GM12878 (cell line): ENCODE measurements at regions of chr2 and their contacts with region 1.

Region 1: DNA sequence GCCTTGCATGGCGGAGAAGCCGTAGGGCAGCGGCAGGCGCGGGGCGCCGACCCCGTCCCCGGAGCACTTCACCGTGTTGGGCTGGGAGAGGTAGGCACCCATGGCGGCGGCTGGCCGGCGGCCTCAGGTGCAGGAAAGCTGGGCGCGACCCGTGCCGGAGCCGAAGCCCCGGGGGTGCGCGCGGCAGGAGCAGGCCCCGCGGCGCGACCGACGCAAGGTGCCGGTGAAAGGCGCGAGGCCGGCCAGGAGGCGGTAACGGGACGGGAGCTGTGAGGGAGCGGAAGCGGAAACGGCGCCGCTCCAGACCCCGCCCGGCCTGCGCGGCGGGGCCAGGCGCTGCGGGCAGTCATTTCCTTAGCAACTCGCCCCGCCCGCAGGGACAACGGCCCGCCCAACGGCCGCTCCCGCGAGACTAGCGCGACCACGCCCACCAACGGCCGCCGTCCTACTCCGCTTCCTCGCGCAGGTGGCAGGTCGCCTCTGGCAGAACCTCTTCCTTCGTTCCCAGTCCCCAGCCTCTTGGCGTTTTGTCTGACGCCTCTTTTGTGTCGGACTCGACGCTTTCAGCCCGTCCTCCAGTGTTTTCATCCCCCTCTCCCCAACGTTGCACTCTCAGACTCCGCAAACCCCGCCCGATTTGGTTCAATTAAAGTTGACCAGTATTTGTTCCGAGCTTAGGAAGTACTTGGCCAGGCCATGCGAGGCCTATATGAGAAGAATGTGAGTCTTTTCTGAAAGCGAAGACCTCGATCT is at the start of gene PPM1G:
- DNase-seq: peak; percentile 85
- ATAC-seq: peak; percentile 97
- H3K4me3 ChIP-seq: peak within 1 kb of the TSS; percentile 99
- H3K27ac ChIP-seq: peak within 1 kb of the TSS; percentile 76
- H3K4me1 ChIP-seq: peaks cover 6% of the 10 kb centered on the region; the same call in 1 of the 2 replicates
- H3K27me3 ChIP-seq: no peaks in the 10 kb centered on the region
- CTCF ChIP-seq: no peak
- EP300 ChIP-seq: no peak
- POLR2A ChIP-seq: peak; percentile 95
- RAD21 ChIP-seq: no peak
- polyA plus RNA-seq, gene PPM1G: 78.5 to 81.1 TPM

Region 2: GRCh38 chr2:26993768-26994167 is 415.7 kb before region 1 on chr2:
- CTCF ChIA-PET with region 1: no interaction called
- POLR2A ChIA-PET with region 1: no interaction called
- RAD21 ChIA-PET with region 1: no interaction called
- SMC1A ChIA-PET with region 1: no interaction called
- in situ Hi-C with region 1: no loop called
- intact Hi-C with region 1: no loop called
- DNase-seq: no peak
- ATAC-seq: no peak
- H3K4me3 ChIP-seq: no peak overlapping the region
- H3K27ac ChIP-seq: no peak overlapping the region
- H3K4me1 ChIP-seq: no peaks in the 10 kb centered on the region
- H3K27me3 ChIP-seq: peaks cover 1 to 2% of the 10 kb centered on the region in 2 experiments; a peak in 3 of 4 replicates
- CTCF ChIP-seq: no peak
- EP300 ChIP-seq: no peak
- POLR2A ChIP-seq: no peak
- RAD21 ChIP-seq: no peak

Region 3: DNA sequence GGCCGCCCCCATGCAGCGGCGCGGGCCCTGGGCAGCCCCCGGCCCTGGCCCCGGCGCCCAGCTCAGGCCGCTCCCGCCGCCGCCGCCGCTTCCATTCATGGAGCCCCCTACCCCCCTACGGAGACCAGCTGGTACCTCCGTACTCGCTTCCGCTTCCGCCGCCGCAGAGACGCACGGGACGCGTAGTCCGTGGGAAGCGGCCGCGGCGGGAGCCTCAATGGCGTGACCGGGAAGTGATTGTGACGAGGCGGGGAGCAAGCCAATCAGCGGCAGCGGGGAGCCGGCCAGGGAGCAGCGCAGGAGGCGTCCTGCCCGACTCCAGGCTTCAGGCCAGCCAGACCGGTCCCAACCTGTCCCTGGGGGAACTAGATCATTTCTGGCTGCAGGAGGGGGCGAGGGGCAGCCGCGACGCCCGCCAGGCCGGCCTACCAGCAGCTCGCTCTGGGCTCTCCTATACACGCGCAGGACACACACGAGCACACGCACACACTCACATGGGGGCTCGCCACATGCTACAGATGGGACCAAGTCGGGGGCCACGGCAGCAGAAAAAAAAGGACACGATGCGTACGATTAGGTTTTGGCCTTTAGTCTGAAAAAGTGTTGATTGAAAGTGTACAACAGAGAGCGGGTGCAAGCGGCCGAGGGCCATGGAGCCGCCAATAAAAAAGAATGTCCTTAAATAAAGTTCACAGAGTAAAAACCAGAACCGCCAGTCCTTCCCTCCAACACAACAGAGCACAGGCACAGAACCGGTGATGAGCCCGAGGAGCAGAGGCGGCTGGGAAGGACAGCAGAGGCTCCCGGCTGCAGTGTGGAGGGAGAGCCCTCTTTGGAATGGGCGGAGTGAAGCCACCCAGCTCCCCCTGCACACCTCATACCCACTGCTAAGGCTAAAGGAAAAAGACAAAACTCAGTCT is 28.6 kb before region 1 on chr2 and contains the start of gene ZNF513:
- CTCF ChIA-PET with region 1: interaction called, 3 read pairs
- POLR2A ChIA-PET with region 1: interaction called, 10 read pairs
- RAD21 ChIA-PET with region 1: no interaction called
- SMC1A ChIA-PET with region 1: interaction called, 4 read pairs
- in situ Hi-C with region 1: no loop called
- intact Hi-C with region 1: no loop called
- DNase-seq: peak; percentile 55
- ATAC-seq: peak; percentile 95
- H3K4me3 ChIP-seq: peak within 1 kb of the TSS; percentile 69
- H3K27ac ChIP-seq: peak within 1 kb of the TSS; percentile 96
- H3K4me1 ChIP-seq: peaks cover 9% of the 10 kb centered on the region; the same call in 1 of the 2 replicates
- H3K27me3 ChIP-seq: no peaks in the 10 kb centered on the region
- CTCF ChIP-seq: no peak
- EP300 ChIP-seq: no peak
- POLR2A ChIP-seq: peak; percentile 91
- RAD21 ChIP-seq: no peak
- polyA plus RNA-seq, gene ZNF513: 0.06 to 0.18 TPM

Region 4: GRCh38 chr2:27428213-27428977 is 18.9 kb after region 1 on chr2 and contains the start of gene NRBP1:
- CTCF ChIA-PET with region 1: interaction called, 52 read pairs
- POLR2A ChIA-PET with region 1: interaction called, 71 read pairs
- RAD21 ChIA-PET with region 1: interaction called, 29 read pairs
- SMC1A ChIA-PET with region 1: interaction called, 20 read pairs
- in situ Hi-C with region 1: no loop called
- intact Hi-C with region 1: loop called (anchors 2 kb)
- DNase-seq: peak; percentile 52
- ATAC-seq: peak; percentile 93
- H3K4me3 ChIP-seq: peak within 1 kb of the TSS; percentile 97
- H3K27ac ChIP-seq: peak within 1 kb of the TSS; percentile 85
- H3K4me1 ChIP-seq: no peaks in the 10 kb centered on the region
- H3K27me3 ChIP-seq: no peaks in the 10 kb centered on the region
- CTCF ChIP-seq: no peak
- EP300 ChIP-seq: no peak
- POLR2A ChIP-seq: peak; percentile 93
- RAD21 ChIP-seq: no peak
- polyA plus RNA-seq, gene NRBP1: 5.7 to 8.6 TPM

Region 5: DNA sequence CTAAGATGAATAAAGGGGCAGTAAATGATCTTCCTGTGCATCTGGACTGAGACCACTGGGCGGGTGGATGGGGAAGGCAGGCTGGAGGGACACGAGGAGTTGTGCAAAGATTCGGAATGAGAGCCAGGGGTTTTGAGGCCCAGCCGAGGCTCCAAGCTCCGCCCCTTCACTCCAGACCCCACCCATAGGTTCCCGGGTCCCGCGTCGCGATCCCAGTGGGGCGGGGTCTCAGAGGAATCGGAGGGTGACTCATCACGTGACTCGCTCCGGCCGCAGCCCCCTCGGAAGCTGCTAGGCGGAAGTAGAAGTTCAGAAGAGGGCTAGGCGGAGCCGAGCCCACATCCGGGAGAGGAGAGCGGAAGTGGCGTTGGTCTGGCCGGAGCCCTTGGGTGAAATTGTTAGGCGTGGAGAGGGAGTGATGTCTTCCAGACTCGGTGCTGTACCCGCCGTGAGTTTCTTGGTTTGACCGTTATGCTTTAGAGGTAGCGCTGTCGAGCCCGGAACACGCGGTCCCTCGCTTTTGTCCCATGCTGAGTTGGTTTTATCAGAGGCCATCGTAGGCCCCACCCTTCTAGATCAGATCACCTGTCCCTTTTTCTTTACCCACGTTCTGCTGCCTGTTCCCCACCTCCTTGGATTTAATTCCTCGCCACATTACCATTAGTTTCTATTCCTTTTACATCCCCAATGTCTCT is 173.3 kb after region 1 on chr2 and contains the start of gene ZNF512:
- CTCF ChIA-PET with region 1: no interaction called
- POLR2A ChIA-PET with region 1: interaction called, 6 read pairs
- RAD21 ChIA-PET with region 1: no interaction called
- SMC1A ChIA-PET with region 1: no interaction called
- in situ Hi-C with region 1: no loop called
- intact Hi-C with region 1: loop called (anchors 10 kb)
- DNase-seq: peak; percentile 73
- ATAC-seq: peak; percentile 96
- H3K4me3 ChIP-seq: peak within 1 kb of the TSS; percentile 98
- H3K27ac ChIP-seq: peak within 1 kb of the TSS; percentile 68
- H3K4me1 ChIP-seq: 0 out of 2 replicates have a peak, but pooled peaks cover 3% of the 10 kb centered on the region
- H3K27me3 ChIP-seq: no peaks in the 10 kb centered on the region
- CTCF ChIP-seq: no peak; a peak in 1 of 6 replicates
- EP300 ChIP-seq: peak in 1 of 2 experiments; percentile 59; a peak in 2 of 4 replicates
- POLR2A ChIP-seq: peak; percentile 80
- RAD21 ChIP-seq: no peak
- polyA plus RNA-seq, gene ZNF512: 14.1 to 21.2 TPM